Activated CD8-positive, alpha-beta memory T cell treated with anti-CD3 and anti-CD28 coated beads, Interleukin-2, amount 10 ng/mL, durations not matched to agents 7 days and 5 days (primary cell): ENCODE measurements at regions of chr3 and their contacts with region 1.

Region 1: DNA sequence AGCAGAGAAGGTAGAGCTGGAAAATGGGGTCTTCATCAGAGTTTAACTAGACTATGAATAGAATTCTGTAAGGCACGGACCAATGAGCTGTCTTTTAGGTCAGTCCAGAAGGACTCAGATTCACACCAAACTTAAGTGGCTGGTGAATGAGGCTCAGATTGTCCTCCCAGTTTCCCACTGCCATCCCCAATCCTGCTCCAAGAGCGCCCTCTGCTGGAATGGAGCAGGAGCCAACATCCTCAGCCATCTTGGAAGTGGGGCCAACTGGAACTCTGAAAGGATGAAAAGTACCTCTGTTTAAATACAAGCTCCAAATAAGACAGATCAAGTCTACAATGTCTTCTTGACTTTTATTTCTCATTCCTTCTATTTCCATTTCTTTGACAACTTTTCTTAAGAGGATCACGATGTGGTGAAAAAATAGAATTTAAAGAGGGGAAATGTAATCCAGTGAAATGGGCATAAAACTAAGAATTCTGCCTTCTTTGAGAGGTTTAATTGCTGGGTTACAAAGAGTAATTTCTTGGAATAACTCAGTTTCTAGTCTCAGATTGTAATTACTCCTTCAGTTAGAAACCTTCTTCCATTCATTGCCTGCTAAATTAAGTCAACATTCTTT is 217.1 kb upstream of the TPRG1 start:
- DNase-seq: peak; percentile 83
- ATAC-seq: peak; percentile 82
- H3K4me3 Mint-ChIP-seq: no peak overlapping the region
- H3K27ac Mint-ChIP-seq: no peak overlapping the region
- H3K4me1 Mint-ChIP-seq: peaks cover 13% of the 10 kb centered on the region
- H3K27me3 Mint-ChIP-seq: no peaks in the 10 kb centered on the region

Region 2: GRCh38 chr3:187745201-187746058 is 1209.3 kb before region 1 on chr3 and contains the start of gene BCL6:
- CTCF ChIA-PET with region 1: interaction called, 391 read pairs
- DNase-seq: peak; percentile 94
- ATAC-seq: peak; percentile 50
- H3K4me3 Mint-ChIP-seq: peak within 1 kb of the TSS; percentile 98
- H3K27ac Mint-ChIP-seq: peak within 1 kb of the TSS; percentile 99
- H3K4me1 Mint-ChIP-seq: peaks cover 52% of the 10 kb centered on the region
- H3K27me3 Mint-ChIP-seq: peaks cover 4% of the 10 kb centered on the region
- total RNA-seq, gene BCL6: 12.1 to 13.2 TPM

Region 3: DNA sequence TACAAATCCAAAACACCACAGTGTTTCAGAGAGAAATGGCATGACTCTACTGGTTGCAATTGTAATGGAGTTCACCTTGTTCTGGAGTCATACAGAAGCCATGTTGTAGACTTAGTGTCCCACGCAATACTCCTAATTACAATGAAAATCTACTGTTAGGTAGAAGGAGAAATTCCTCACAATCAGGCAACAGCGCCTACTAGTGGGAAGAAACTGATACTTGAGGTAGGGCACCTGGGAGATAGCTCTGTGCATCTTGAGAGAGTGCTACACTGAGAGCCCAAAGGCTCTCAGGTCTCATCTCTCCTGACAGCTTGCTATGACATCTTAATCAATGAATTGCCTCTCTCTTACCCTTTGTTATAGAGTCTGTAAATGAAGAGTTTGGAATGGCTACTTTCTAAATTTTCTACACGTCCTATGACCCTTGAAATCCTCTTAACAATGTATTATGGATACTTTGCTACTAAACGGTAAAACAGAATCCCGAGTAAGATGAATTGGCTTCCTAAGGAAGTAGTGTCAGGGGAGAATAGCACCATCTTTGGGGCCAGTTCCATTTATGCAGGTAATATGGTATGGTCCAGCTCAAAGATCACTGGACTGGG is 205.6 kb before region 1 on chr3:
- CTCF ChIA-PET with region 1: interaction called, 12 read pairs
- DNase-seq: peak; percentile 58
- ATAC-seq: peak; percentile 55
- H3K4me3 Mint-ChIP-seq: no peak overlapping the region
- H3K27ac Mint-ChIP-seq: no peak overlapping the region
- H3K4me1 Mint-ChIP-seq: peaks cover 15% of the 10 kb centered on the region
- H3K27me3 Mint-ChIP-seq: peaks cover 3% of the 10 kb centered on the region

Region 4: GRCh38 chr3:188780193-188781147 is 174.2 kb before region 1 on chr3:
- CTCF ChIA-PET with region 1: no interaction called
- DNase-seq: no peak
- ATAC-seq: no peak
- H3K4me3 Mint-ChIP-seq: no peak overlapping the region
- H3K27ac Mint-ChIP-seq: no peak overlapping the region
- H3K4me1 Mint-ChIP-seq: peaks cover 10% of the 10 kb centered on the region
- H3K27me3 Mint-ChIP-seq: no peaks in the 10 kb centered on the region

Region 5: DNA sequence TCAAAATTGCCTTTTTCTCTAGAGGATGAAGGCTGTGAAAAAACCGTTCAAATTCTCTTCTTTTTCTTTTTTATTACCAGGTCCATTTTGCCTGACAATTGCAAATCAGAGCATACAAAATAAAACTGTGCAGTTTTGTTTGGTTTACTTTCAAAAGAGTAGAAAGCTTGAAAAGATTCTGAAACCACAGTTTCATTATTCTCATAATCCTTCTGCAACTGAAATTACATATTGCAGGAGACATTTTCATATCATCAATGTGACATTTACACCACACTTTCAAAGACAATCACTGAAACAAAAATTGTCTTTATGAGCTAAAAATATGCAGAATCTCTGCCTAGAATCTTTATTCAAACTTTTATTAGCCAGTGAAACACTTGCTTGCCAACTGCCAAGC is 79.3 kb before region 1 on chr3:
- CTCF ChIA-PET with region 1: no interaction called
- DNase-seq: no peak
- ATAC-seq: no peak
- H3K4me3 Mint-ChIP-seq: no peak overlapping the region
- H3K27ac Mint-ChIP-seq: no peak overlapping the region
- H3K4me1 Mint-ChIP-seq: no peaks in the 10 kb centered on the region
- H3K27me3 Mint-ChIP-seq: no peaks in the 10 kb centered on the region

Region 6: DNA sequence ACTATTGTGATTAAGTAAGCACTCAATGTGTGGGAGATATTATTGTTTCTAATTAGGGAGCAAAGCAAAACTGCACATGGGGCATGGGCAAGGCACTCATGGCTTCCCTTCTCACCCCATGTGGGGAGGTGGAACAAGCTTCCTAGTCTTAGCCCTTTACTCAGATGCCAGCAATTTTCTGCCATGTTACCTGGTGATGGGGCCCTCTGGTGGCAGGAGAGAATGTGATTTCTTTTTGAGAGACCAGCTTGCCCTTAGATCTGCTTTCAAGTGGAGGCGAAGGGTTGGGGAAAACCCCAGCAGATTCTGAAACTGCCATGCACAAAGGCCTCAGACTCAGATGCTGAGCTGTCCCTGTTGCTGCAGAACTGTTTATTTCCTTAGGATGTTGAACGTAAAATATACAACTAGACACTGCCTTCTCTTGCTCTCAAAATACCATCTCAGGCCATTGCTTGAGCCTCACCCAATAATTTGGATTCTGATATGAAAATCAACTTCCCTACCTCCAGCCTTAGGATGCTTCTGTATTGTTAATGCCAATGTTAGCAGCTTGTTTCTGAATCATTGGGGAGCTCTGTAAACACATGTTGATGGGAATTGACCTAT is 86.9 kb after region 1 on chr3:
- CTCF ChIA-PET with region 1: interaction called, 43 read pairs
- DNase-seq: peak; percentile 86
- ATAC-seq: peak; percentile 94
- H3K4me3 Mint-ChIP-seq: no peak overlapping the region
- H3K27ac Mint-ChIP-seq: peak overlapping the region; percentile 73
- H3K4me1 Mint-ChIP-seq: peaks cover 58% of the 10 kb centered on the region
- H3K27me3 Mint-ChIP-seq: no peaks in the 10 kb centered on the region

Region 7: DNA sequence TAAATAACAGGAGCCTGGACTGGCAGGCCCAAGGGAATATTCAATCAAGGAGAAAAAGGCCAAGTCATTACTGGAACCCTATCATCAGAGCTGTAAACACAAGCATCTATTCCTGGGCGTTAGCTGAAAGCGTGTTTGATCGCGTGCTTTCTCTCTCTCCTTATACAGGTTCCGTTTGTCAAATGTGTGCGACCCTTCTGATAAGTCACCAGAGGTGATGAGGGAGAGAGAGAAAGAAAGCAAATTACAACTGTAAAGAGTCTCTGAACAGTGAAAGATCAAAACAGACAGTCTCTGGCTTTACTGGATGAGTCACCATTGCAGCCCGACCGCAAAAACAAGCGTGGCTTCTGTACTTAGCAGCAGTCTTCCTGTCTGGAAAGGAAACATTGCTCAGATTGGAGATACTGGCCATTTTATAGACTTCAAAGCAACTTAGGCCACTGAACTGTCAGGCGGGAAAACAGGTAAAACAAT is 177.6 kb after region 1 on chr3:
- CTCF ChIA-PET with region 1: interaction called, 10 read pairs
- DNase-seq: peak; percentile 93
- ATAC-seq: peak; percentile 99
- H3K4me3 Mint-ChIP-seq: peak overlapping the region; percentile 57
- H3K27ac Mint-ChIP-seq: peak overlapping the region; percentile 98
- H3K4me1 Mint-ChIP-seq: peaks cover 31% of the 10 kb centered on the region
- H3K27me3 Mint-ChIP-seq: no peaks in the 10 kb centered on the region

Region 8: DNA sequence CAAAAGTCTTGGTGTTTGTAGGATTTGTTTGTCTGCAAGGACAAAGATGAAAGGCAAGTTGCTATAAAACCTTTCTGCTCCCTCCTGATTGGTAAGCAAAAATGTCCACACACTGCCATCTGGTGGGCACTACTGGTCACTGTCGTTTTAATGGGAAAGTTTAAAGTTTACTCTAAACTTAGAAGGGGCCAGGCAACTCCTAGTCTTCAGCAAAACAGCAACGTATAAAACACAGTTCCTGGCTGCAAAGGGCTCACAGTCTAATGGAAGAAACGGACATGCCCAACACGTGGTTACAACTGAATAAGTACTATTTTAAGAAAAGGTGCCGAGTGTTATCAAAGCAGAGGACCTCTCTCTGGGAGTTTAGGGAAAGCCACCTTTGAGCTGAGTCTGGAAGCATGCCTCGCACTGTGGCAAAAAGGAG is 193.4 kb after region 1 on chr3:
- CTCF ChIA-PET with region 1: interaction called, 57 read pairs
- DNase-seq: peak; percentile 78
- ATAC-seq: peak; percentile 73
- H3K4me3 Mint-ChIP-seq: no peak overlapping the region
- H3K27ac Mint-ChIP-seq: no peak overlapping the region
- H3K4me1 Mint-ChIP-seq: peaks cover 32% of the 10 kb centered on the region
- H3K27me3 Mint-ChIP-seq: no peaks in the 10 kb centered on the region